Breast epithelium (tissue), 4 donors: ENCODE measurements at regions of chr7 and their contacts with region 1.

Region 1: GRCh38 chr7:39042670-39043069 is 65.0 kb downstream of the POU6F2 start:
- DNase-seq: no peak
- H3K4me3 ChIP-seq: no peak overlapping the region
- H3K27ac ChIP-seq: no peak overlapping the region
- H3K4me1 ChIP-seq: no peaks in the 10 kb centered on the region
- H3K27me3 ChIP-seq: no peaks in the 10 kb centered on the region
- CTCF ChIP-seq: no peak
- POLR2A ChIP-seq: no peak

Region 2: GRCh38 chr7:38975944-38976392 is 66.7 kb before region 1 on chr7:
- intact Hi-C with region 1: loop called (anchors 2 kb)
- DNase-seq: no peak
- H3K4me3 ChIP-seq: peak overlapping the region; percentile 6 to 29 (median 11)
- H3K27ac ChIP-seq: no peak overlapping the region
- H3K4me1 ChIP-seq: no peaks in the 10 kb centered on the region
- H3K27me3 ChIP-seq: peaks cover 4 to 33% of the 10 kb centered on the region in 2 donors
- CTCF ChIP-seq: no peak
- POLR2A ChIP-seq: no peak

Region 3: GRCh38 chr7:39154815-39155214 is 112.1 kb after region 1 on chr7:
- intact Hi-C with region 1: loop called (anchors 5 kb)
- DNase-seq: no peak
- H3K4me3 ChIP-seq: no peak overlapping the region
- H3K27ac ChIP-seq: no peak overlapping the region
- H3K4me1 ChIP-seq: no peaks in the 10 kb centered on the region
- H3K27me3 ChIP-seq: no peaks in the 10 kb centered on the region
- CTCF ChIP-seq: no peak
- POLR2A ChIP-seq: no peak